Activated CD4-positive, alpha-beta memory T cell treated with anti-CD3 and anti-CD28 coated beads for 36 hours (primary cell): ENCODE measurements at regions of chr1 and their contacts with region 1.

Region 1: GRCh38 chr1:159924981-159925712 is at the start of gene TAGLN2:
- DNase-seq: peak; percentile 93
- H3K4me3 Mint-ChIP-seq: peak within 1 kb of the TSS; percentile 93
- H3K27ac Mint-ChIP-seq: peak within 1 kb of the TSS; percentile 98
- H3K4me1 Mint-ChIP-seq: peaks cover 38% of the 10 kb centered on the region
- H3K27me3 Mint-ChIP-seq: no peaks in the 10 kb centered on the region
- total RNA-seq, gene TAGLN2: 597 to 607 TPM

Region 2: DNA sequence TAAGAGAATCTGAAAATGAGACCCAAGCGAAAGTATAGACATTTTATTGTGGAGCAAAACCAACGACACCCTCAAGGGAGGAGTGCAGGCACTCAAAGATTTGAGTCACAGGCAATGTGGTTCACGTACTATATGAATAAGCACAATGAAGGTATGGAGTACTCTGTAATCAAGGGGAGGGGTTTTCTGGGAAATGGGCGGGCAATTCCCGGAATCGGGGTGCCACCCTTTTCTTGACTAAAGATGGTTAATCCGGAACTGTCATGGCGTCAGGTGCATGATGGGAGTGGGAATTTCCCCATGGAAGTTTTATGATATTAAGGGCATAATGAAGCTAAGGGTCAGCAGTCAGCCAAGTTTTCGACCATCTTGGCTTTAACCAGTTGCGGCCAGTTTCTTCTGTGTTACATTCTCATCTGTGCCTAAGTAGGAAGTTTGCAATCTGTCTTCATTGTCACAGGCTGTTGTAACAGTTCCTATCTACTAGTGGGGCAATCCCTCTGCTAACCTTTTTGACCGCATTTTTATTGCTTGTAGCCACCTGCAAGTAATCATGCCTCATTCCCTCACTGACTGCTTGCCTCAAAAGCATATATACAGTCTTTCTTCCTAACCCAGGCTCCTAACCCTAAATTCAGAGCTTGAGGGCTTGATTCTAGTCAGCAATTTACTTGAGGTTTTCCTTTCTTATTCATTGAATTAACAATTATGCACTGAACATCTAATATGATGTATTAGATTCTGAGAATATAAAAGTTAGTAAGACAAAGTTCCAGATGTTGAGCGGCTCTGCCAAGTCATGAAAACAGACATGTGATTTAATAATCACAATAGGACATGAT is 847.8 kb before region 1 on chr1:
- CTCF ChIA-PET with region 1: no interaction called
- POLR2A ChIA-PET with region 1: interaction called, 9 read pairs
- intact Hi-C with region 1: loop called (anchors 5 kb)
- DNase-seq: peak; percentile 100
- H3K4me3 Mint-ChIP-seq: peak overlapping the region; percentile 95
- H3K27ac Mint-ChIP-seq: peak overlapping the region; percentile 97
- H3K4me1 Mint-ChIP-seq: peaks cover 52% of the 10 kb centered on the region
- H3K27me3 Mint-ChIP-seq: no peaks in the 10 kb centered on the region

Region 3: DNA sequence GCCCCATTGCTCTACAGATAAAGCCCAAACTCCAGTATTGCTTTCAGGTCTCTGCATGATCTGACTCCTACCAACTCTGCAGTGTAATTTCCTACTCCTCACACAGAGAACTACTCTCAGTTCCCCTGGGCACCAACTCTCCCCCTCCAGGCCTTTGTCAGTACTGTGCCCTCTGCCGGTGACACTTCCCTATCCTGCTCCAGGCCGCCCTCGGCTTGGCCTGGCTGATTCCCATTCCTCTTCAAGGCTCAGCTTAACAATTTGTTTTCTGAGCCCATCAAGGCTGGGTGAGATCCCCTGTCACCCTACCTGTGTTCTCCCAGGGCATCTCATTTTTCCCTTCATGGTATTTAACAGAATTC is 95.9 kb before region 1 on chr1:
- CTCF ChIA-PET with region 1: no interaction called
- POLR2A ChIA-PET with region 1: no interaction called
- intact Hi-C with region 1: no loop called
- DNase-seq: no peak
- H3K4me3 Mint-ChIP-seq: no peak overlapping the region
- H3K27ac Mint-ChIP-seq: no peak overlapping the region
- H3K4me1 Mint-ChIP-seq: peaks cover 42% of the 10 kb centered on the region
- H3K27me3 Mint-ChIP-seq: no peaks in the 10 kb centered on the region

Region 4: DNA sequence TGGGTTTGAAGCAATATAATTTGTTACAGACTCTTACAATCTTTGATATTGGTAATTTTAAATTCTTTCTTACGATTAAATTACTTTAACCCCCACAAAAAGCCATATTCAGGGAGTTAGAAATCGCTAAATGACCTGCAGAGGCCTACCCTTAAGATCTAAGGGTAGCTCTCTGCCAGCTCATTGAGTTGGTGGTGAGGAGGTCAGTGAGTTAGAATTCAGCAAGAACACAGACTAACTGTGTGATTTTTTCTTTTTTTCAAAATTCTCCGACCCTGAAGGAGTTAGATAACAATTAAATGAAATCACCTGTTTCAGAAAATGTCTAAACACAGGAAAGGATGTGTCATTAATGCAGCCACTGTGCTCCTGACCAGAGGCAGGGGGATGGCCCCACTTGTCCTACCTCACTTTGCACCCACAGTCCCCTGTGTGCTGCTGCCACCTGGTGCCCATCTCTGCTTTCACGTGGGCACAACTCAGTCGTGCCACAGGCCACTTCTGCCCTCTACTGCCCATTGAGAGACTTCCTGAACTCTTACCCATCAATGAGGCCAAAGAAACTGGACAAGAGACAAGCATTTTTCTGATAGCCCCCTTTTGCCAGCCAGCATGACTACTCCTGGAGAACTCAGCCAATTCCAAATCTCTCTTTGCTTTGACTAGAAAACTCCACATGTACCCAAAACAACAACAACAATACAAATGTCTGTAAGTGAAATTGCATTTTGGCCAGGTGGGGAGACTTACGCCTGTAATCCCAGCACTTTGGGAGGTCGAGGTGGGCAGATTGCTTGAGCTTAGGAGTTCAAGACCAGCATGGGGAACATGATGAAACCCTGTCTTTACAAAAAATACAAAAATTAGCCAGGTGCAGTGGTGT is 33.6 kb before region 1 on chr1:
- CTCF ChIA-PET with region 1: interaction called, 15 read pairs
- POLR2A ChIA-PET with region 1: interaction called, 5 read pairs
- intact Hi-C with region 1: no loop called
- DNase-seq: peak; percentile 89
- H3K4me3 Mint-ChIP-seq: no peak overlapping the region
- H3K27ac Mint-ChIP-seq: no peak overlapping the region
- H3K4me1 Mint-ChIP-seq: peaks cover 9% of the 10 kb centered on the region
- H3K27me3 Mint-ChIP-seq: no peaks in the 10 kb centered on the region

Region 5: DNA sequence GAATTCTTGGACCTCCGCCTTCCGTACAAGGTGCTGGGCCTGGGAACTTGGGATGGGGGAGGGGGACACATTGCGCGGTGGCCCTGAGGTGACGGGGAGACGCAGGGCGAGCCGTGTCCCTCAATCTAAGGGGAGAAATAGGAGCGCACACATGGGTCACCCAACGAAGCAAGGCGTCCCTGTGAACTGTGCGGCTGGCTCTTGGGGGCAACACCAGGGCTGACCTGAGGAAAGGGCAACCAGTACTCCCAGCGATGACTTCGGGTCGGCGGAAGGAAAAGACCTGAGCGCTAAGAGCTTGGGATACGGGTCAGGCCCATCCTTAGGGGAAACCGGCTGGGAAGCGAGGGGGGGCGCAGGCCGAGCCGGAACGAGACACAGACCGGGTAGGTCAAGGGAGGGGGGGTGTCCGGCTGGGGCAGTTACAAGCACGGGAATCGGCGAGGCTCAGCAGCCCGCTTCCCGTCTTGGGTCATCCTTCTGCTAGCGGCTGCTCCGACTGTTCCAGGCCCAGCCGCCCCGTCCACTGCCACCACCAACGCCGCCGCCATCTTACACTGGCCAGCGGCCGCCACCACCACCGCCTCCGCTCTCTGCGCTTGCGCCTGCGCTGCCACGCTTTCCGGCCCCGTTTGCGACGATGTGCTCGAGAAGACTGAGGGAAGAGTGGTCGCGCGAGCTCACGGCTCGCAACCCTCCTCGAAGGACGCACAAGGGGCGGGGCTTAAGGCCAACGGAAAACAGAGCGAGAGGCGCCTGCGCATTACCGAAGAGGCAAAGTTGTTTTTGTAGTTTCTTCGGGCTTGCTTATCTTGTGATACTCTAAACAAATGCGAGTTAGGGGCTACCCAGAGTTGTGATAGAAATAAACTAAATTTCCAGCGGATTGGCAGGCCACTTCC is 337.0 kb after region 1 on chr1 and contains the start of gene DCAF8:
- CTCF ChIA-PET with region 1: no interaction called
- POLR2A ChIA-PET with region 1: interaction called, 7 read pairs
- intact Hi-C with region 1: loop called (anchors 5 kb)
- DNase-seq: peak; percentile 99
- H3K4me3 Mint-ChIP-seq: peak within 1 kb of the TSS; percentile 96
- H3K27ac Mint-ChIP-seq: peak within 1 kb of the TSS; percentile 99
- H3K4me1 Mint-ChIP-seq: peaks cover 45% of the 10 kb centered on the region
- H3K27me3 Mint-ChIP-seq: no peaks in the 10 kb centered on the region
- total RNA-seq, gene DCAF8: 142 to 150 TPM